ENCODE measurements at regions of chr1 and their contacts with region 1.

Region 1: GRCh38 chr1:228165372-228166169 is at the start of gene IBA57:
- DNase-seq: peak; percentile 99
- ATAC-seq: peak; percentile 82 to 93 (median 82)
- H3K4me3 ChIP-seq: peak within 1 kb of the TSS; percentile 53
- H3K4me3 Mint-ChIP-seq: peak within 1 kb of the TSS; percentile 94
- H3K27ac ChIP-seq: peak within 1 kb of the TSS; percentile 92
- H3K27ac Mint-ChIP-seq: peak within 1 kb of the TSS; percentile 94 to 95
- H3K4me1 ChIP-seq: peaks cover 32% of the 10 kb centered on the region
- H3K4me1 Mint-ChIP-seq: peaks cover 28 to 34% of the 10 kb centered on the region in 2 donors
- H3K27me3 ChIP-seq: no peaks in the 10 kb centered on the region
- H3K27me3 Mint-ChIP-seq: no peaks in the 10 kb centered on the region
- CTCF ChIP-seq: peak; percentile 70
- total RNA-seq, gene IBA57: 13.3 to 14.1 (median 13.8) TPM

Region 2: GRCh38 chr1:228082135-228082891 is 83.3 kb before region 1 on chr1 and contains the start of gene ARF1:
- intact Hi-C with region 1: loop called (anchors 5 kb)
- DNase-seq: peak; percentile 94 to 97
- ATAC-seq: peak; percentile 87 to 99 (median 91)
- H3K4me3 ChIP-seq: peak within 1 kb of the TSS; percentile 94
- H3K4me3 Mint-ChIP-seq: peak within 1 kb of the TSS; percentile 92
- H3K27ac ChIP-seq: peak within 1 kb of the TSS; percentile 97
- H3K27ac Mint-ChIP-seq: peak within 1 kb of the TSS; percentile 93 to 94
- H3K4me1 ChIP-seq: peaks cover 53% of the 10 kb centered on the region
- H3K4me1 Mint-ChIP-seq: peaks cover 38 to 63% of the 10 kb centered on the region in 2 donors
- H3K27me3 ChIP-seq: no peaks in the 10 kb centered on the region
- H3K27me3 Mint-ChIP-seq: no peaks in the 10 kb centered on the region
- CTCF ChIP-seq: no peak
- total RNA-seq, gene ARF1: 368 to 427 (median 424) TPM

Region 3: DNA sequence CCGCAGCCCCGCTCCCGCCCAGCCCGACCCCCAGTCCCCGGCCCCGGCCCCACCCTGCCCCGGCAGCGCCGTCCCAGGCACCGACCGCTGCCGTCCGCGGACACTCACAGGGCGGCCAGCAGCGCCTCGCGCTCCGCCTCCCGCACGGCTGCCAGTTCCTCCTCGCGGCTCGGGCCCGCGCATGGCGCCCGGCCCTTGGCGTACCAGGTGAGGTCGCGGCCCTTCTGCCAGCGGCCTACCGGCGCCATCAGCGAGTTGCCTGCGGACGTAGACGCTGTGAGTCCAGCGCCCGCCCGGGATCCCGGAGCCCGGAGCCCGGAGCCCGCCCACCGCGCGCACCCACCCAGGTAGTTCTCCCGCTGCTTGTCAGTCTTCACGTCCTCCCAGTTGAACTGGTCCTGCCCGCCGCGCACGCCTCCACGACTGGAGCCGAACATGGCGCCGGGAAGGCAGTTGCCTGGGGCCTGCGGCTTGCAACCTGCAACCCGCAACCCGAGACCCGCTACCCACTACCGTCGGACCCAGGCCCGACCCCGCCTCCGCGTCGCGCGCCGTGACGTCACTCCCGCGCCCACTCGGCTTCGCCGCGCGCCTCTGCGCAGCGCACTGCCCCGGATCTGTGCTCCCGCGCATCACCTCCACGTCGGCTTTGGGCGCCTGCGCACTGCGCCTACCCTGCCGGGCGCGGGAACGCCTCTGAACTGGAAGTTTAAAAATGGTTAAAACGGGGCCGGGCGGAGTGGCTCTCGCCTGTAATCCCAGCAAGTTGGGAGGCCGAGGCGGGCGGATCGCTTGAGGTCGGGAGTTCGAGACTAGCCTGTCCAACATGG is 62.6 kb before region 1 on chr1 and contains the start of gene C1orf35:
- intact Hi-C with region 1: loop called (anchors 2 kb)
- DNase-seq: peak; percentile 93 to 97
- ATAC-seq: peak; percentile 84 to 90 (median 85)
- H3K4me3 ChIP-seq: peak within 1 kb of the TSS; percentile 96
- H3K4me3 Mint-ChIP-seq: peak within 1 kb of the TSS; percentile 94
- H3K27ac ChIP-seq: peak within 1 kb of the TSS; percentile 92
- H3K27ac Mint-ChIP-seq: peak within 1 kb of the TSS; percentile 93 to 96
- H3K4me1 ChIP-seq: peaks cover 35% of the 10 kb centered on the region
- H3K4me1 Mint-ChIP-seq: peaks cover 30 to 33% of the 10 kb centered on the region in 2 donors
- H3K27me3 ChIP-seq: no peaks in the 10 kb centered on the region
- H3K27me3 Mint-ChIP-seq: no peaks in the 10 kb centered on the region
- CTCF ChIP-seq: no peak
- total RNA-seq, gene C1orf35: 18.9 to 21.6 (median 19.6) TPM

Region 4: GRCh38 chr1:228109073-228109961 is 56.3 kb before region 1 on chr1 and contains the start of gene MRPL55:
- intact Hi-C with region 1: loop called (anchors 1 kb)
- DNase-seq: peak; percentile 99 to 100
- ATAC-seq: peak; percentile 97 to 100 (median 98)
- H3K4me3 ChIP-seq: peak within 1 kb of the TSS; percentile 82
- H3K4me3 Mint-ChIP-seq: peak within 1 kb of the TSS; percentile 93
- H3K27ac ChIP-seq: peak within 1 kb of the TSS; percentile 91
- H3K27ac Mint-ChIP-seq: peak within 1 kb of the TSS; percentile 86 to 99
- H3K4me1 ChIP-seq: peaks cover 25% of the 10 kb centered on the region
- H3K4me1 Mint-ChIP-seq: peaks cover 14 to 24% of the 10 kb centered on the region in 2 donors
- H3K27me3 ChIP-seq: no peaks in the 10 kb centered on the region
- H3K27me3 Mint-ChIP-seq: no peaks in the 10 kb centered on the region
- CTCF ChIP-seq: no peak
- total RNA-seq, gene MRPL55: 50.0 to 70.6 (median 64.1) TPM

Region 5: GRCh38 chr1:228139944-228140656 is 25.5 kb before region 1 on chr1 and contains the start of gene GUK1:
- intact Hi-C with region 1: loop called (anchors 1 kb)
- DNase-seq: peak; percentile 100
- ATAC-seq: peak; percentile 83 to 95 (median 86)
- H3K4me3 ChIP-seq: peak within 1 kb of the TSS; percentile 99
- H3K4me3 Mint-ChIP-seq: peak within 1 kb of the TSS; percentile 98
- H3K27ac ChIP-seq: peak within 1 kb of the TSS; percentile 99
- H3K27ac Mint-ChIP-seq: peak within 1 kb of the TSS; percentile 95 to 96
- H3K4me1 ChIP-seq: peaks cover 64% of the 10 kb centered on the region
- H3K4me1 Mint-ChIP-seq: peaks cover 22 to 51% of the 10 kb centered on the region in 2 donors
- H3K27me3 ChIP-seq: no peaks in the 10 kb centered on the region
- H3K27me3 Mint-ChIP-seq: no peaks in the 10 kb centered on the region
- CTCF ChIP-seq: no peak
- total RNA-seq, gene GUK1: 292 to 313 (median 308) TPM

Measured in natural killer cell (primary cell).